Endothelial cell of umbilical vein (primary cell): ENCODE measurements at regions of chr11 and their contacts with region 1.

Region 1: GRCh38 chr11:66616379-66617154 is at the start of gene RBM14:
- DNase-seq: peak; percentile 99
- H3K4me3 ChIP-seq: peak within 1 kb of the TSS; percentile 55 to 93 (median 75)
- H3K27ac ChIP-seq: peak within 1 kb of the TSS; percentile 86
- H3K4me1 ChIP-seq: peaks cover 24% of the 10 kb centered on the region
- H3K27me3 ChIP-seq: no peaks in the 10 kb centered on the region
- CTCF ChIP-seq: no peak
- POLR2A ChIP-seq: peak; percentile 98
- total RNA-seq, gene RBM14: 95.9 and 104 TPM in 2 replicates

Region 2: GRCh38 chr11:66545701-66546367 is 70.7 kb before region 1 on chr11 and contains the start of gene ZDHHC24:
- CTCF ChIA-PET with region 1: interaction called, 3 read pairs
- POLR2A ChIA-PET with region 1: interaction called, 9 read pairs
- dilution Hi-C with region 1: no loop called
- intact Hi-C with region 1: loop called (anchors 1 kb)
- DNase-seq: peak; percentile 99
- H3K4me3 ChIP-seq: peak within 1 kb of the TSS; percentile 70 to 81 (median 78)
- H3K27ac ChIP-seq: peak within 1 kb of the TSS; percentile 62
- H3K4me1 ChIP-seq: peaks cover 33% of the 10 kb centered on the region
- H3K27me3 ChIP-seq: no peaks in the 10 kb centered on the region
- CTCF ChIP-seq: no peak
- POLR2A ChIP-seq: peak; percentile 90
- total RNA-seq, gene ZDHHC24: 18.3 and 20.1 TPM in 2 replicates

Region 3: GRCh38 chr11:66556086-66556485 is 60.5 kb before region 1 on chr11:
- CTCF ChIA-PET with region 1: no interaction called
- POLR2A ChIA-PET with region 1: no interaction called
- dilution Hi-C with region 1: no loop called
- intact Hi-C with region 1: no loop called
- DNase-seq: no peak
- H3K4me3 ChIP-seq: no peak overlapping the region
- H3K27ac ChIP-seq: no peak overlapping the region
- H3K4me1 ChIP-seq: no peaks in the 10 kb centered on the region
- H3K27me3 ChIP-seq: peaks cover 5 to 6% of the 10 kb centered on the region in 2 experiments
- CTCF ChIP-seq: no peak
- POLR2A ChIP-seq: no peak

Region 4: DNA sequence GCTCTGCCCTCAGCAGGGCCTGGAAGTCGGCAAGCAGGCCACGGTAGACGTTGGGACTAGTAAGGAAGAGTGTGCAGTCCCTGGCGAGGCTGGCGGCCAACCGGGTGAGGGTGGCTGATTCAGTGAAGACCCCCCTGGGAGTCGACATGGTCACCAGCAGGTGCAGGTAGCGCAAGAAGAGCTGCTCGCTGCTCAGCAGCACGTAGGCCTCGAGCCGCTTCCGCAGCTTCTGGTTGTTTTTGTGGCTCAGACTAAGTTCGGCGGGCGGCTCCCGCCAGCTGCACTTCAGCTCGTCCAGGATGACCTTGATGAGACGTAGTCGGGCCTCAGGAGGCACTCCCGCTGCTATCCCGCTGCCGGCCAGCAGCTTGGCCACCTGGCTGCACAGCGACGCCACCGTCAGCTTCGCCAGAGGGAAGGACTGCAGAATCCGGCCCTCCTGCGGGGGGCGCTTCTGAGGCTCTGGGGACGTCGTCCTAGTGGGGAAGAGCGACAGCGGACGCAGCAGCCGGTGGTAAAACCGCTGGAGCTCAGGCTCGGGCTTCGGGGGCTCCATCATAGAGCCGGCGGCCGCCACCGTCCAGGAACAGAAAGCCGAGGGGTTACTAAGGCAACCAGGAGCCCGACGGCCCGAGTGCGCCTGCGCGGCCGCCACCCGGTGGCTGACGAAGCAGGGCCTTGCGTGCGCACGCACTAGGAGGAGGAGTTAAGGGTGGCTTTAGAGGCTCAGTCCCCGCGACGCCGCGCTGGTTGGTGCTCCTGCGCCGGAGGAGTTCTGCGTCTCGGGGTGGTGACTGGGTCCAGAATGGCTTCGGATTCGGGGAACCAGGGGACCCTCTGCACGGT is 23.9 kb before region 1 on chr11 and contains the starts of genes CCDC87 and CCS:
- CTCF ChIA-PET with region 1: interaction called, 6 read pairs
- POLR2A ChIA-PET with region 1: interaction called, 8 read pairs
- dilution Hi-C with region 1: no loop called
- intact Hi-C with region 1: loop called (anchors 1 kb)
- DNase-seq: peak; percentile 97
- H3K4me3 ChIP-seq: peak within 1 kb of the TSS; percentile 22 to 63 (median 60)
- H3K27ac ChIP-seq: no peak within 1 kb of the TSS
- H3K4me1 ChIP-seq: peaks cover 5% of the 10 kb centered on the region
- H3K27me3 ChIP-seq: peaks cover 0 to 2% of the 10 kb centered on the region in 2 experiments
- CTCF ChIP-seq: peak; percentile 73 to 87
- POLR2A ChIP-seq: peak; percentile 98
- total RNA-seq, gene CCDC87: 0.22 and 0.28 TPM in 2 replicates
- total RNA-seq, gene CCS: 37.2 and 38.7 TPM in 2 replicates